ENCODE measurements at regions of chr6 and their contacts with region 1.

Region 1: GRCh38 chr6:403659-404655 is 12.4 kb downstream of the IRF4 start:
- DNase-seq: peak in 1 of 10 donors; percentile 11
- ATAC-seq: peak; percentile 18 to 42
- H3K4me3 Mint-ChIP-seq: peak overlapping the region; percentile 73 to 89 (median 84)
- H3K27ac Mint-ChIP-seq: peak overlapping the region; percentile 54 to 93 (median 86)
- H3K4me1 Mint-ChIP-seq: peaks cover 19 to 52% (median 35%) of the 10 kb centered on the region in 4 donors
- H3K27me3 Mint-ChIP-seq: no peaks in the 10 kb centered on the region

Region 2: DNA sequence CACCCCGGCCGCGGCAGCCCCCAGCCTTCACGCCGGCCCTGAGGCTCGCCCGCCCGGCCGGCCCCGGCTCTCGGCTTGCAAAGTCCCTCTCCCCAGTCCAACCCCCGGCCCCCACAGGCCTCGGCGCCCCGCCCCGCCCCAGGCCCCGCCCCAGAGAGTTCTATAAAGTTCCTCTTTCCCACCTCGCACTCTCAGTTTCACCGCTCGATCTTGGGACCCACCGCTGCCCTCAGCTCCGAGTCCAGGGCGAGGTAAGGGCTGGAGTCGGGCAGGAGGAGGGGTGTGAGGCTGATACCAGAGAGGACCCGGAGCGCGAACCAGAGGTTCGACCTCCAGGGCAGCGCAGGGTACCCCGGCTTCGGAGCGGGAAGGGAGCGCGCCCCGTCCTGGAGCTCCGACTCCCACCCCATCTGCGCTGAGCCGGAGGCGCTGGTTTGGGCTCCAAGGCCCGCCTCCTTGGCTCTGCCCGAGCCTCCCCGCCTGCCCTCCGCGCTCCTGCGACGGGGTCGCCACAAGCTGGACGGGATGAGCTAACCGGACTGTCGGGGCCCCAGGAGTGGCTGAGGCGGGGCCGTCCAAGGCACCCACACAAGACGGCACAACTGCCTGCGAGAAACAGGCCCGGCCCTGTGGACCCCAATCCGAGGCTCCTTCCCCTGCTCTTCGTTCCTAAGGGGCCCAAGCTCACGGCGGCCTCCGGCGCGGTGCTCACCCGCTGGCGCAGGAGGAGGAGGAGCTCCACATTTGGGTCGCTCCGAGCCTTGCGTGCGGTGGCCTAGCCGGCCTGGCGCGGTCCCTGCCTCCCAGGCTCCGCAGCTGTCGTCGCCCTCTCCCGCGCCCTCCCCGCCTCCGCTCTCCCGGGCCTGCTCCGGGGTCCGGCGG is 12.2 kb before region 1 on chr6 and contains the start of gene IRF4:
- POLR2A ChIA-PET with region 1: interaction called, 11 read pairs
- DNase-seq: peak in 4 of 10 donors; percentile 21 to 45 (median 30)
- ATAC-seq: peak; percentile 36 to 48
- H3K4me3 Mint-ChIP-seq: peak within 1 kb of the TSS; percentile 84 to 95 (median 92)
- H3K27ac Mint-ChIP-seq: peak within 1 kb of the TSS in 7 of 10 donors; percentile 40 to 84 (median 75)
- H3K4me1 Mint-ChIP-seq: peaks cover 7 to 37% (median 31%) of the 10 kb centered on the region in 4 donors
- H3K27me3 Mint-ChIP-seq: peaks cover 0 to 13% (median 10%) of the 10 kb centered on the region in 5 donors
- polyA plus RNA-seq, gene IRF4: 0.44 to 0.97 (median 0.94) TPM